ENCODE measurements at regions of chr1 and their contacts with region 1.

Region 1: GRCh38 chr1:61851849-61852669 is 109.8 kb downstream of the PATJ start:
- DNase-seq: peak; percentile 79
- ATAC-seq: peak; percentile 87
- H3K4me3 ChIP-seq: no peak overlapping the region
- H3K27ac ChIP-seq: no peak overlapping the region
- H3K4me1 ChIP-seq: no peaks in the 10 kb centered on the region
- H3K27me3 ChIP-seq: peaks cover 2% of the 10 kb centered on the region; the same call in 1 of the 2 replicates
- CTCF ChIP-seq: peak; percentile 89
- POLR2A ChIP-seq: no peak
- RAD21 ChIP-seq: peak; percentile 90

Region 2: DNA sequence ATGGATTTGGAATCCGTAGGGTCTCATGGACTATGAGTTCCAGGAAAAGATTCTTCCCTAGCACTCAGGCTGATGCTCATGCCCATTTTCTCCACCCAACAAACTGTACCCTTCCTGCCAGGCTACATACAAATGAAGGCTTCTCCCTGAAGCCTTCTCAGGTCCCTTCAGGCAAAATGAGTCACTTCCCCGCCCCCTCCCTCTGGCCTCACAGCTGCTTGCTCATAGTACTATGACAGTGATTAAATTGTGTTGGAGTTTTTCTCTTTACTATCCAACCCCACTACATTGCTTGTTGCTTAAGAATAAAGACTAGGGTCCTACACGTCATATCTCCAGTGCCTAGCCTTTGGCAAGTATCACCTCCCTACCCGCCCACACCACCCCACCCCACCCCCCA is 977.3 kb before region 1 on chr1:
- CTCF ChIA-PET with region 1: no interaction called
- POLR2A ChIA-PET with region 1: no interaction called
- dilution Hi-C with region 1: no loop called
- in situ Hi-C with region 1: loop called (anchors 25 kb)
- intact Hi-C with region 1: no loop called
- DNase-seq: peak; percentile 16
- ATAC-seq: no peak
- H3K4me3 ChIP-seq: no peak overlapping the region
- H3K27ac ChIP-seq: no peak overlapping the region
- H3K4me1 ChIP-seq: no peaks in the 10 kb centered on the region
- H3K27me3 ChIP-seq: no peaks in the 10 kb centered on the region
- CTCF ChIP-seq: no peak
- POLR2A ChIP-seq: no peak
- RAD21 ChIP-seq: no peak

Region 3: GRCh38 chr1:61049850-61050540 is 802.1 kb before region 1 on chr1:
- CTCF ChIA-PET with region 1: interaction called, 10 read pairs
- POLR2A ChIA-PET with region 1: no interaction called
- dilution Hi-C with region 1: no loop called
- in situ Hi-C with region 1: loop called (anchors 25 kb)
- intact Hi-C with region 1: loop called (anchors 2 kb)
- DNase-seq: peak; percentile 68
- ATAC-seq: peak; percentile 95
- H3K4me3 ChIP-seq: peak overlapping the region; percentile 61
- H3K27ac ChIP-seq: no peak overlapping the region
- H3K4me1 ChIP-seq: no peaks in the 10 kb centered on the region
- H3K27me3 ChIP-seq: peaks cover 42% of the 10 kb centered on the region
- CTCF ChIP-seq: peak; percentile 92
- POLR2A ChIP-seq: no peak
- RAD21 ChIP-seq: peak; percentile 81

Region 4: GRCh38 chr1:61469365-61469764 is 382.7 kb before region 1 on chr1:
- CTCF ChIA-PET with region 1: interaction called, 3 read pairs
- POLR2A ChIA-PET with region 1: no interaction called
- dilution Hi-C with region 1: no loop called
- in situ Hi-C with region 1: no loop called
- intact Hi-C with region 1: loop called (anchors 5 kb)
- DNase-seq: no peak
- ATAC-seq: no peak
- H3K4me3 ChIP-seq: no peak overlapping the region
- H3K27ac ChIP-seq: no peak overlapping the region
- H3K4me1 ChIP-seq: no peaks in the 10 kb centered on the region
- H3K27me3 ChIP-seq: no peaks in the 10 kb centered on the region
- CTCF ChIP-seq: no peak
- POLR2A ChIP-seq: no peak
- RAD21 ChIP-seq: no peak

Region 5: GRCh38 chr1:61741711-61742619 is 110.1 kb before region 1 on chr1 and contains the start of gene PATJ:
- CTCF ChIA-PET with region 1: interaction called, 5 read pairs
- POLR2A ChIA-PET with region 1: no interaction called
- dilution Hi-C with region 1: no loop called
- in situ Hi-C with region 1: no loop called
- intact Hi-C with region 1: loop called (anchors 5 kb)
- DNase-seq: peak; percentile 4
- ATAC-seq: peak; percentile 55
- H3K4me3 ChIP-seq: peak within 1 kb of the TSS; percentile 80
- H3K27ac ChIP-seq: peak within 1 kb of the TSS; percentile 82
- H3K4me1 ChIP-seq: peaks cover 5% of the 10 kb centered on the region; the same call in 1 of the 2 replicates
- H3K27me3 ChIP-seq: no peaks in the 10 kb centered on the region
- CTCF ChIP-seq: no peak
- POLR2A ChIP-seq: no peak
- RAD21 ChIP-seq: no peak
- total RNA-seq, gene PATJ: 3.4 and 5.3 TPM in 2 replicates